ENCODE measurements at regions of chr1 and their contacts with region 1.

Region 1: DNA sequence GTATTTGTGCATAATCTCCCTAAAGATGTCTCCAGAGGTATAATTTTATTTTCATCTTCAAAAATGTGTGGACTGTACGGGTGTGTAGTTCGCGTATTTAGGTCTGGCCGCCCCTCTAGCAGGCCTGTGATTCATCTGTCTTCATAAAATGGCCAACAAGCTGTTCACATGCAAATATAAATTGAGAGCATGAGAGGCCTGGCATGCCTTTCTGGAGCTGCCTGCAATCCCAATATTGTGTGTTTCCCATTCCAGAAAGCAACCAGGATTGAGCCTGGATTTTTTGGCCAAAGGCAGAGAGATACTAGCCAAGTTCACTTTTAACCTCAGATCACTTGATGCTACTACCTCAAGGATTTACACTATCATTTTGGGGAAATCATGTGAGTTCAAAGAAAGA is 197.2 kb downstream of the NFIA start:
- DNase-seq: no peak
- H3K4me3 ChIP-seq: peak overlapping the region in 1 of 2 donors; percentile 10
- H3K27ac ChIP-seq: peak overlapping the region; percentile 68 to 76
- H3K4me1 ChIP-seq: peaks cover 0 to 27% of the 10 kb centered on the region in 2 donors
- H3K27me3 ChIP-seq: no peaks in the 10 kb centered on the region
- CTCF ChIP-seq: no peak

Region 2: GRCh38 chr1:61190618-61191432 is 88.7 kb before region 1 on chr1:
- intact Hi-C with region 1: loop called (anchors 5 kb)
- DNase-seq: no peak
- H3K4me3 ChIP-seq: peak overlapping the region in 1 of 2 donors; percentile 14
- H3K27ac ChIP-seq: peak overlapping the region; percentile 84 to 92
- H3K4me1 ChIP-seq: peaks cover 5 to 47% of the 10 kb centered on the region in 2 donors
- H3K27me3 ChIP-seq: no peaks in the 10 kb centered on the region
- CTCF ChIP-seq: no peak

Region 3: DNA sequence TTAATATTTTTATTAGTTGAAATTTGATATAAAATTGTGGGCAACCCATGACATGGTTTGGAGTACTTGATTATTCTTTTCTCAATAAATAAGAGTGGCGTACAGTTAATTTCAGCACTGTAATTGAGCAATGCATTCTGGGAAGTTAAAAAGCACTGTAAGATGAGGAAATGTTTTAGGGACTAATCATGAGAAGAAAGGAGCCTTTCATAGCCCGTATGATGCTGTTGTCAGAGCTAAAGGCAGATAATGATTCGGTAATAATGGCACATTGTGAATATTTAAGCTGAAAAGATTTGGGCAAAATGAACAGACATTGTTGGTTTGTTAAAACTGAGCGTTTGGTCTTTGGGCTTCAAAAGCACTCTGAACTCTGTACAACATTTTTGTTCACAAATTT is 57.9 kb before region 1 on chr1:
- intact Hi-C with region 1: loop called (anchors 5 kb)
- DNase-seq: no peak
- H3K4me3 ChIP-seq: peak overlapping the region in 1 of 2 donors; percentile 40
- H3K27ac ChIP-seq: peak overlapping the region; percentile 10 to 30
- H3K4me1 ChIP-seq: peaks cover 4 to 29% of the 10 kb centered on the region in 2 donors
- H3K27me3 ChIP-seq: no peaks in the 10 kb centered on the region
- CTCF ChIP-seq: no peak

Region 4: GRCh38 chr1:61244114-61244513 is 35.5 kb before region 1 on chr1:
- intact Hi-C with region 1: loop called (anchors 5 kb)
- DNase-seq: peak in 1 of 2 donors; percentile 63
- H3K4me3 ChIP-seq: peak overlapping the region in 1 of 2 donors; percentile 7
- H3K27ac ChIP-seq: peak overlapping the region; percentile 57 to 58
- H3K4me1 ChIP-seq: peaks cover 4 to 20% of the 10 kb centered on the region in 2 donors
- H3K27me3 ChIP-seq: no peaks in the 10 kb centered on the region
- CTCF ChIP-seq: no peak

Measured in ascending aorta (tissue), 2 donors.